Caco-2 (cell line): ENCODE measurements at regions of chr4 and their contacts with region 1.

Region 1: DNA sequence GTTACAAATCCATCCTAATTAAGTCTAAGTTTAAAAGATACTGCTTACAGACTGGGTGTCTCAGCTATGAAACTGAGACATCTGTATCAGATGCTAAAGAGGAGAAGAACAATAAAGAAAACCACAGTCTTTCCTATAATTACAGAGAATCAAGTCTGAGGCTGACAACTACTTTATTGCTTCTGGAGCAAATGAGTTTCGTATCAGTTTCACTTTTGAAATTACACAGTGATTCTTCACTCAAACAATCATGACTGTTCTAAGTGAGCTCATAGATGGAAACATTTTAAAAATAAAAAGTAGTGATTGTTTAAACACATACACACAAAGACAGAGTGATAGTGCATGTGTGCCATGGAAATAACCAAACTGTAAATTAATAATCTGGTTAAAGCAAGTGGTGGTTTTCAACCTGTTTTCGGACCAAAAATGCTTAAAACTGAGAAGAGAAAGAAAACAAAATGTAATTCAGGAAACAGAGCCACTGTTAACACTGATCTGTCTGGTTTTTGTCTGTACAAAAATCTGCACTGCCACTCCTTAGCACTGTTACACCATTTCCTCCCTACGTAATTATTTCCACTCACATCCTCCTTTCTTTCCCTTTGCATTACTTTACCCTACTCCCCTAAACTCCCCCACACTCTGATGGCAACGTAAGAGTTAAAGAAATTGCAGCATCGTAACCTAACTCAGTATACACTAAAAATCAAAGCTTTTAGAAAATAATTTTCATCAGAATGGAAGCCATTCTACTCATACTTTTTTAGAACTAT is 12.5 kb downstream of the RFC1 start:
- DNase-seq: no peak
- H3K4me3 ChIP-seq: no peak overlapping the region
- H3K4me3 Mint-ChIP-seq: peak overlapping the region; percentile 30
- H3K27ac Mint-ChIP-seq: peak overlapping the region; percentile 65
- H3K4me1 ChIP-seq: peaks cover 22% of the 10 kb centered on the region
- H3K4me1 Mint-ChIP-seq: peaks cover 21% of the 10 kb centered on the region
- H3K27me3 ChIP-seq: no peaks in the 10 kb centered on the region
- H3K27me3 Mint-ChIP-seq: no peaks in the 10 kb centered on the region
- CTCF ChIP-seq: no peak

Region 2: DNA sequence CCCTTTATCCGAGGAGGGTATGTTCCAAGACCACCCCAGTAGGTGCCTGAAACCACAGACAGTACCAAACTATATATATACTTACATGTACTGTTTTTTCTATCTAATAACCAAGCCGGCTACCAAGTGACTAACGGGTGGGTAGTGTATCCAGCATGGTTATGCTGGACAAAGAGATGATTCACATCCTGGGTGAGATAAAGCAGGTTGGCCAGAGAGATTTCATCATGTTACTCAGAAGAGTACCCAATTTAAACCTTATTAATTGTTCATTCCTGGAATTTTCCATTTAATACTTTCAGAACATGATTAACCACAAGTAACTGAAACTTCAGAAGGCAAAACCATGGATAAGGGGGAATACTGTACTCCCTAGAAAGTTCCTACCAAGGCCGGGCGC is 34.0 kb before region 1 on chr4:
- CTCF ChIA-PET with region 1: no interaction called
- POLR2A ChIA-PET with region 1: no interaction called
- intact Hi-C with region 1: loop called (anchors 2 kb)
- DNase-seq: no peak
- H3K4me3 ChIP-seq: no peak overlapping the region
- H3K4me3 Mint-ChIP-seq: no peak overlapping the region
- H3K27ac Mint-ChIP-seq: no peak overlapping the region
- H3K4me1 ChIP-seq: peaks cover 37% of the 10 kb centered on the region
- H3K4me1 Mint-ChIP-seq: peaks cover 12% of the 10 kb centered on the region
- H3K27me3 ChIP-seq: no peaks in the 10 kb centered on the region
- H3K27me3 Mint-ChIP-seq: no peaks in the 10 kb centered on the region
- CTCF ChIP-seq: no peak

Region 3: GRCh38 chr4:39427520-39428114 is 74.0 kb after region 1 on chr4:
- CTCF ChIA-PET with region 1: no interaction called
- POLR2A ChIA-PET with region 1: no interaction called
- intact Hi-C with region 1: no loop called
- DNase-seq: no peak
- H3K4me3 ChIP-seq: no peak overlapping the region
- H3K4me3 Mint-ChIP-seq: no peak overlapping the region
- H3K27ac Mint-ChIP-seq: peak overlapping the region; percentile 42
- H3K4me1 ChIP-seq: peaks cover 28% of the 10 kb centered on the region
- H3K4me1 Mint-ChIP-seq: peaks cover 20% of the 10 kb centered on the region
- H3K27me3 ChIP-seq: no peaks in the 10 kb centered on the region
- H3K27me3 Mint-ChIP-seq: no peaks in the 10 kb centered on the region
- CTCF ChIP-seq: no peak